ENCODE measurements at regions of chr1 and their contacts with region 1.

Region 1: DNA sequence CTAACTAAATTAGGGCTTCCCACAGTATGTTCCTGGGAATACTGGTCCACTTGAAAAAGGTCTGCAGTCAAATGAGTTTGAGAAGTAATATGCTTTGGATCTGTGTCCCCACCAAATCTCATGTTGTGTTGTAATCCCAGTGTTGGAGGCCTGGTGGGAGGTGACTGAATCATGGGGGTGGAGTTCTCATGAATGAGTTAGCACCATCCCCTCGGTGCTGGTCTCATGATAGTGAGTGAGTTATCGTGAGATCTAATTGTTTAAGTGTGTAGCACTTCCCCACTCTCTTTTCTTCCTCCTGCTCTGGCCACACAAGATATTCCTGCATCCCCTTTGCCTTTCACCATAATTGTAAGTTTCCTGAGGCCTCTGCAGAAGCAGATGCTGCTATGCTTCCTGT is 16.9 kb upstream of the DMRTB1 start:
- DNase-seq: no peak
- H3K27ac ChIP-seq: no peak overlapping the region
- CTCF ChIP-seq: no peak

Region 2: DNA sequence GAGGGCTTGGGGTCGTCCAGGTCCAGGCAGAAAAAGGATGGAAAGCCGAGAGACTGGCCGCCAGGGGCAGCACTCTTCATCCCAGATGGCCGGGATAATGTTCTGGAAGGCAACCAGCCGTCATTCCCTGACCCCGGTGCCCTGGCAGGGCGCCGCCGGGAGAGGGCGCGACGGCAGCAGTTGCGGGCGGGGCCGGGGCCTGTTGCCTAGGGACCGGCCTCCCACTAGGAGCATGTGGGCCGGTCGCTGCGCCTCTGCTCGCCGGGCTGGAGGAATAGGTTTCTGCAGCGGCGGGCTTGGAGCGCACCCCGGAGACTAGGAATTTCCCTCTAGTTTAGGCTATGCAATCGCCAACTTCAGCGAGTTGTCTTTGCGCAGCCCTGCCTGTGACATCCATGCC is 27.9 kb after region 1 on chr1:
- CTCF ChIA-PET with region 1: interaction called, 4 read pairs
- POLR2A ChIA-PET with region 1: interaction called, 13 read pairs
- DNase-seq: peak; percentile 58
- H3K27ac ChIP-seq: no peak overlapping the region
- CTCF ChIP-seq: peak; percentile 45

Measured in RWPE1 (cell line).